CD8-positive, alpha-beta T cell (primary cell): ENCODE measurements at regions of chr12 and their contacts with region 1.

Region 1: GRCh38 chr12:69157023-69157655 is 82.2 kb upstream of the CPSF6 start:
- DNase-seq: peak; percentile 78 to 93 (median 87)
- ATAC-seq: peak; percentile 97
- H3K4me3 ChIP-seq: no peak overlapping the region
- H3K4me3 Mint-ChIP-seq: peak overlapping the region; percentile 65
- H3K27ac ChIP-seq: no peak overlapping the region
- H3K27ac Mint-ChIP-seq: no peak overlapping the region
- H3K4me1 ChIP-seq: peaks cover 9% of the 10 kb centered on the region
- H3K4me1 Mint-ChIP-seq: peaks cover 19% of the 10 kb centered on the region
- H3K27me3 ChIP-seq: no peaks in the 10 kb centered on the region
- H3K27me3 Mint-ChIP-seq: peaks cover 7% of the 10 kb centered on the region
- CTCF ChIP-seq: peak; percentile 78

Region 2: DNA sequence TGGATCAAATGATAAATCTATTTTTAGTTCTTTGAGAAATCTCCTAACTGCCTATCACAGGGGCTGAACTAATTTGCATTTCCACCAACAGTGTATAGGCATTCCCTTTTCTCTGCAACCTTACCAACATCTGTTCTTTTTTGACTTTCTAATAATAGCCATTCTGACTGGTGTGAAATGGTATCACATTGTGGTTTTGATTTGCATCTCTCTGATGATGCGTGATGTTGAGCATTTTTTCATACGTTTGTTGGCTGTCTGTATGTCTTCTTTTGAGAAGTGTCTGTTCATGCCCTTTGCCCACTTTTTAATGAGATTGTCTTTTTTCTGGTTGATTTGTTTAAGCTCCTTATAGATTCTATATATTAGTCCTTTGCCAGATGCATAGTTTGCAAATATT is 1100.8 kb before region 1 on chr12:
- CTCF ChIA-PET with region 1: no interaction called
- POLR2A ChIA-PET with region 1: no interaction called
- intact Hi-C with region 1: no loop called
- DNase-seq: no peak
- ATAC-seq: no peak
- H3K4me3 ChIP-seq: no peak overlapping the region
- H3K4me3 Mint-ChIP-seq: no peak overlapping the region
- H3K27ac ChIP-seq: no peak overlapping the region
- H3K27ac Mint-ChIP-seq: no peak overlapping the region
- H3K4me1 ChIP-seq: no peaks in the 10 kb centered on the region
- H3K4me1 Mint-ChIP-seq: no peaks in the 10 kb centered on the region
- H3K27me3 ChIP-seq: no peaks in the 10 kb centered on the region
- H3K27me3 Mint-ChIP-seq: no peaks in the 10 kb centered on the region
- CTCF ChIP-seq: no peak

Region 3: GRCh38 chr12:68807576-68808387 is 349.4 kb before region 1 on chr12 and contains the start of gene MDM2:
- CTCF ChIA-PET with region 1: no interaction called
- POLR2A ChIA-PET with region 1: no interaction called
- intact Hi-C with region 1: loop called in 1 of 2 experiments (anchors 10 kb)
- DNase-seq: peak; percentile 94 to 99 (median 97)
- ATAC-seq: peak; percentile 91
- H3K4me3 ChIP-seq: peak within 1 kb of the TSS; percentile 97
- H3K4me3 Mint-ChIP-seq: peak within 1 kb of the TSS; percentile 95
- H3K27ac ChIP-seq: peak within 1 kb of the TSS; percentile 86 to 95
- H3K27ac Mint-ChIP-seq: peak within 1 kb of the TSS; percentile 97
- H3K4me1 ChIP-seq: peaks cover 24% of the 10 kb centered on the region
- H3K4me1 Mint-ChIP-seq: peaks cover 30% of the 10 kb centered on the region
- H3K27me3 ChIP-seq: no peaks in the 10 kb centered on the region
- H3K27me3 Mint-ChIP-seq: no peaks in the 10 kb centered on the region
- CTCF ChIP-seq: peak; percentile 66
- total RNA-seq, gene MDM2: 95.1 to 98.0 TPM

Region 4: GRCh38 chr12:69254046-69254445 is 96.9 kb after region 1 on chr12:
- CTCF ChIA-PET with region 1: interaction called, 132 read pairs
- POLR2A ChIA-PET with region 1: interaction called, 6 read pairs
- intact Hi-C with region 1: loop called (anchors 1 kb)
- DNase-seq: peak in 2 of 9 experiments; percentile 76 to 84
- ATAC-seq: peak; percentile 93
- H3K4me3 ChIP-seq: no peak overlapping the region
- H3K4me3 Mint-ChIP-seq: no peak overlapping the region
- H3K27ac ChIP-seq: peak overlapping the region in 1 of 2 experiments; percentile 32
- H3K27ac Mint-ChIP-seq: peak overlapping the region; percentile 82
- H3K4me1 ChIP-seq: peaks cover 13% of the 10 kb centered on the region
- H3K4me1 Mint-ChIP-seq: peaks cover 47% of the 10 kb centered on the region
- H3K27me3 ChIP-seq: no peaks in the 10 kb centered on the region
- H3K27me3 Mint-ChIP-seq: no peaks in the 10 kb centered on the region
- CTCF ChIP-seq: peak; percentile 77

Region 5: GRCh38 chr12:69354556-69355187 is 197.5 kb after region 1 on chr12:
- CTCF ChIA-PET with region 1: interaction called, 3 read pairs
- POLR2A ChIA-PET with region 1: no interaction called
- intact Hi-C with region 1: loop called (anchors 2 to 5 kb)
- DNase-seq: no peak
- ATAC-seq: no peak
- H3K4me3 ChIP-seq: no peak overlapping the region
- H3K4me3 Mint-ChIP-seq: no peak overlapping the region
- H3K27ac ChIP-seq: no peak overlapping the region
- H3K27ac Mint-ChIP-seq: no peak overlapping the region
- H3K4me1 ChIP-seq: peaks cover 9% of the 10 kb centered on the region
- H3K4me1 Mint-ChIP-seq: peaks cover 13% of the 10 kb centered on the region
- H3K27me3 ChIP-seq: no peaks in the 10 kb centered on the region
- H3K27me3 Mint-ChIP-seq: peaks cover 14% of the 10 kb centered on the region
- CTCF ChIP-seq: no peak

Region 6: DNA sequence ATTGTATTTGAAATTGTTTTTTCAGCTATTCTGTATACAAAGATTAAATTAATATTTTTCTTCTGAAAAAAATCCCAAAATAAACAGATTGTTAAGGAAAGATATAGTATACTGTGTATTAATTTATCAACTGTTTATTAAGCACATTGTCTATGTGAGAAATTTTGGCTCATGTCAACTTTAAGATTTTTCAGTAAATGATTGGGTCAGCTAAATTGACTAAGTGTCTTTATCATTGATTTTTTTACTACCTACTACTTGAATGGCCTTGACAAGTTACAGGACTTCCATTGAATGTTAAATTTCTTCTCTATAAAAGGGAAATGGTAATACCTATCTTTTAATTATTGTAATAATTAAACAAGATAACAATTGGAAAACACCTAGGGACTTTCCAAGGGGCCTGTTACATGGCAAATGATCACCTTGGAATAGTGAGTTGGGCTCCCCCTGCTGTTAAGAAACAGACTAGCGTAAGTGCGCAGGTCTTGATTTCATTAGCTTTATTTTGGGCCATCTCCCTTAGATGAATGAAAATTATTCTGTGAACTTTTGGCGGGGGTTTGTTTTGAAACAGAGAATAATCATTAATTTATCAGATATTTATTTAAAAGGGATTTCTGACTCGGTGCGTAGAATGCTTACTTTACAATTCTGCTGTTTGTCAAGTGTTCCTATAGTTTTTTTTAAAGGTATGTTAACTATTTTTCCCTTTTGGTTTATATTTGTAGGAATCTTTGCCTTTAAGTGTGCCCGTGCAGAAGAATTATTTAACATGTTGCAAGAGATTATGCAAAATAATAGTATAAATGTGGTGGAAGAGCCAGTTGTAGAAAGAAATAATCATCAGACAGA is 413.6 kb after region 1 on chr12:
- CTCF ChIA-PET with region 1: interaction called, 3 read pairs
- POLR2A ChIA-PET with region 1: no interaction called
- intact Hi-C with region 1: loop called (anchors 2 kb)
- DNase-seq: peak in 8 of 9 experiments; percentile 5 to 86 (median 56)
- ATAC-seq: peak; percentile 83
- H3K4me3 ChIP-seq: no peak overlapping the region
- H3K4me3 Mint-ChIP-seq: no peak overlapping the region
- H3K27ac ChIP-seq: no peak overlapping the region
- H3K27ac Mint-ChIP-seq: no peak overlapping the region
- H3K4me1 ChIP-seq: no peaks in the 10 kb centered on the region
- H3K4me1 Mint-ChIP-seq: no peaks in the 10 kb centered on the region
- H3K27me3 ChIP-seq: no peaks in the 10 kb centered on the region
- H3K27me3 Mint-ChIP-seq: no peaks in the 10 kb centered on the region
- CTCF ChIP-seq: peak; percentile 94

Region 7: GRCh38 chr12:69639400-69640016 is 482.4 kb after region 1 on chr12:
- CTCF ChIA-PET with region 1: interaction called, 5 read pairs
- POLR2A ChIA-PET with region 1: no interaction called
- intact Hi-C with region 1: loop called (anchors 2 kb)
- DNase-seq: peak; percentile 15 to 71 (median 53)
- ATAC-seq: peak; percentile 73
- H3K4me3 ChIP-seq: no peak overlapping the region
- H3K4me3 Mint-ChIP-seq: no peak overlapping the region
- H3K27ac ChIP-seq: no peak overlapping the region
- H3K27ac Mint-ChIP-seq: no peak overlapping the region
- H3K4me1 ChIP-seq: no peaks in the 10 kb centered on the region
- H3K4me1 Mint-ChIP-seq: no peaks in the 10 kb centered on the region
- H3K27me3 ChIP-seq: no peaks in the 10 kb centered on the region
- H3K27me3 Mint-ChIP-seq: no peaks in the 10 kb centered on the region
- CTCF ChIP-seq: peak; percentile 81